Naive thymus-derived CD4-positive, alpha-beta T cell (primary cell): ENCODE measurements at regions of chr11 and their contacts with region 1.

Region 1: GRCh38 chr11:35144136-35144741 is 5.3 kb downstream of the CD44 start:
- DNase-seq: peak in 8 of 9 donors; percentile 59 to 85 (median 74)
- ATAC-seq: peak; percentile 59
- H3K4me3 ChIP-seq: peak overlapping the region; percentile 97
- H3K4me3 Mint-ChIP-seq: peak overlapping the region; percentile 83 to 99 (median 94)
- H3K27ac ChIP-seq: peak overlapping the region; percentile 88
- H3K27ac Mint-ChIP-seq: peak overlapping the region; percentile 79 to 100 (median 92)
- H3K4me1 ChIP-seq: peaks cover 68 to 74% of the 10 kb centered on the region in 2 donors
- H3K4me1 Mint-ChIP-seq: peaks cover 62 to 83% (median 77%) of the 10 kb centered on the region in 7 donors
- H3K27me3 ChIP-seq: no peaks in the 10 kb centered on the region
- H3K27me3 Mint-ChIP-seq: no peaks in the 10 kb centered on the region

Region 2: DNA sequence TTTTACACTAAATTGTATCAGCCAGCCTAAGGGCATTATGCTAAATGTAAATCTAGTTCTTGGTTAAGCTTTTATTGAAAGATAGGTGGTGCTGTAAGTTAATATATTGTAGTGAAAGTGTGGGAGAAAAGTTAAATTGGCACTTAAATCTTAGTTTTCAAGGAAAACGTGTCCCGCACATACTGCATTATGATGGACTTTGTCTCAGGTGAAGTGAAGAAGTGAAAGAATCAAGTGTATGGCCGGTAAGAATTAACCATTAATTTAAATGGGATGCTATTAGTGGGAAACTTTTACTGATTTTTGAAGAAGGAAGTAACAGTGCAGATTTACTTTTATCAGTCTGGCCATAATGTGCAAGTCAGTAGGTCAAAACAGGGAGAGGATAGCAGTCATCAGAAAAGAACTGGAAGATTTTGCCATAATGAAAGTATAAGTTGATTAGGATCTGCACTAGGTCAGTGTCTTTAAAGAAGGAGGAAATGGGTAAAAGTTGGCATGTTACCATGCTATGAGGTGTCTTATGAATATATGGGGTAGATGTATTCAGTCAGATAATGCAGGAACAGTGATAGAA is 146.2 kb before region 1 on chr11:
- CTCF ChIA-PET with region 1: interaction called, 33 read pairs
- POLR2A ChIA-PET with region 1: interaction called, 8 read pairs
- intact Hi-C with region 1: loop called in 1 of 2 experiments (anchors 1 kb)
- DNase-seq: peak in 6 of 9 donors; percentile 27 to 54 (median 44)
- ATAC-seq: peak; percentile 72
- H3K4me3 ChIP-seq: no peak overlapping the region
- H3K4me3 Mint-ChIP-seq: peak overlapping the region in 9 of 10 donors; percentile 6 to 81 (median 34)
- H3K27ac ChIP-seq: peak overlapping the region; percentile 8
- H3K27ac Mint-ChIP-seq: peak overlapping the region; percentile 15 to 90 (median 69)
- H3K4me1 ChIP-seq: peaks cover 15 to 19% of the 10 kb centered on the region in 2 donors
- H3K4me1 Mint-ChIP-seq: peaks cover 19 to 38% (median 35%) of the 10 kb centered on the region in 7 donors
- H3K27me3 ChIP-seq: no peaks in the 10 kb centered on the region
- H3K27me3 Mint-ChIP-seq: no peaks in the 10 kb centered on the region

Region 3: GRCh38 chr11:35040221-35040942 is 103.9 kb before region 1 on chr11:
- CTCF ChIA-PET with region 1: interaction called, 7 read pairs
- POLR2A ChIA-PET with region 1: interaction called, 75 read pairs
- intact Hi-C with region 1: loop called (anchors 1 kb)
- DNase-seq: peak in 8 of 9 donors; percentile 53 to 89 (median 74)
- ATAC-seq: peak; percentile 88
- H3K4me3 ChIP-seq: peak overlapping the region; percentile 60
- H3K4me3 Mint-ChIP-seq: peak overlapping the region; percentile 74 to 94 (median 89)
- H3K27ac ChIP-seq: peak overlapping the region; percentile 86
- H3K27ac Mint-ChIP-seq: peak overlapping the region; percentile 90 to 99 (median 97)
- H3K4me1 ChIP-seq: peaks cover 29 to 45% of the 10 kb centered on the region in 2 donors
- H3K4me1 Mint-ChIP-seq: peaks cover 28 to 77% (median 68%) of the 10 kb centered on the region in 7 donors
- H3K27me3 ChIP-seq: no peaks in the 10 kb centered on the region
- H3K27me3 Mint-ChIP-seq: peaks cover 0 to 29% (median 0%) of the 10 kb centered on the region in 5 donors

Region 4: GRCh38 chr11:35047179-35047578 is 97.1 kb before region 1 on chr11:
- CTCF ChIA-PET with region 1: interaction called, 7 read pairs
- POLR2A ChIA-PET with region 1: interaction called, 75 read pairs
- intact Hi-C with region 1: loop called (anchors 1 kb)
- DNase-seq: peak in 8 of 9 donors; percentile 47 to 88 (median 84)
- ATAC-seq: peak; percentile 79
- H3K4me3 ChIP-seq: no peak overlapping the region
- H3K4me3 Mint-ChIP-seq: peak overlapping the region; percentile 27 to 84 (median 71)
- H3K27ac ChIP-seq: peak overlapping the region; percentile 89
- H3K27ac Mint-ChIP-seq: peak overlapping the region; percentile 90 to 100 (median 99)
- H3K4me1 ChIP-seq: peaks cover 44 to 87% of the 10 kb centered on the region in 2 donors
- H3K4me1 Mint-ChIP-seq: peaks cover 66 to 99% (median 95%) of the 10 kb centered on the region in 7 donors
- H3K27me3 ChIP-seq: no peaks in the 10 kb centered on the region
- H3K27me3 Mint-ChIP-seq: peaks cover 0 to 7% (median 0%) of the 10 kb centered on the region in 5 donors

Region 5: GRCh38 chr11:35158701-35159510 is 14.7 kb after region 1 on chr11:
- CTCF ChIA-PET with region 1: interaction called, 12 read pairs
- POLR2A ChIA-PET with region 1: interaction called, 185 read pairs
- intact Hi-C with region 1: loop called (anchors 1 kb)
- DNase-seq: no peak
- ATAC-seq: no peak
- H3K4me3 ChIP-seq: peak overlapping the region; percentile 6
- H3K4me3 Mint-ChIP-seq: peak overlapping the region; percentile 48 to 94 (median 80)
- H3K27ac ChIP-seq: peak overlapping the region; percentile 94
- H3K27ac Mint-ChIP-seq: peak overlapping the region; percentile 68 to 100 (median 100)
- H3K4me1 ChIP-seq: peaks cover 97 to 98% of the 10 kb centered on the region in 2 donors
- H3K4me1 Mint-ChIP-seq: peaks cover 73 to 100% (median 99%) of the 10 kb centered on the region in 7 donors
- H3K27me3 ChIP-seq: no peaks in the 10 kb centered on the region
- H3K27me3 Mint-ChIP-seq: no peaks in the 10 kb centered on the region

Region 6: GRCh38 chr11:35178873-35179272 is 34.6 kb after region 1 on chr11:
- CTCF ChIA-PET with region 1: interaction called, 11 read pairs
- POLR2A ChIA-PET with region 1: interaction called, 33 read pairs
- intact Hi-C with region 1: loop called (anchors 1 kb)
- DNase-seq: no peak
- ATAC-seq: no peak
- H3K4me3 ChIP-seq: no peak overlapping the region
- H3K4me3 Mint-ChIP-seq: peak overlapping the region in 9 of 10 donors; percentile 44 to 77 (median 59)
- H3K27ac ChIP-seq: peak overlapping the region; percentile 65
- H3K27ac Mint-ChIP-seq: peak overlapping the region; percentile 85 to 100 (median 94)
- H3K4me1 ChIP-seq: peaks cover 84 to 89% of the 10 kb centered on the region in 2 donors
- H3K4me1 Mint-ChIP-seq: peaks cover 62 to 93% (median 91%) of the 10 kb centered on the region in 7 donors
- H3K27me3 ChIP-seq: no peaks in the 10 kb centered on the region
- H3K27me3 Mint-ChIP-seq: no peaks in the 10 kb centered on the region

Region 7: DNA sequence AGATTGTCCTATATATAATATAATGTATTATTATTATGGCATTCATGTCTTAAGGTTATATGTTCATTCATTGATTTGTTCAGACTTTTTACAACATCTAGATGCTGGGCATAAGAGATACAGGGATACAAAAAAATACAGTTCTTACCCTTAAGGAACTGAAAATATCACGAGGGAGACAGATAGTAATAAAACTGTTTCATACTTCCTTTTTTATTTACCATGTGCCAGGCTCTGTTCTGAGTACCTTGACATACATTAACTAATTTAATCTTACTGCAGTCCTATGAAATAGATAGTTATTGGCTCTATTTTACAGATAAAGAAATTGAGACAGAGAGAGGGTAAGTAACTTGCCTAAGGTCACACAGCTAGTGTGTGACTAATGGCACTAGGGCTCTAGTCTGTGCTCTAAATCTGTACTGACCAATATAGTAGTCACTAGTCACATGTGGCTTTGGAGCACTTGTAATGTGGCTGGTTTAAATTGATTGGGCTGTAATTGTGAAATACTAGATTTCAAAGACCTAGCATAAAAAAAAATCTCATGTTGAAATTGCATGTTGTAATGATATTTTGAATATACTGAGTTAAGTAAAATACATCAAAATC is 539.6 kb after region 1 on chr11:
- CTCF ChIA-PET with region 1: no interaction called
- POLR2A ChIA-PET with region 1: no interaction called
- intact Hi-C with region 1: no loop called
- DNase-seq: no peak
- ATAC-seq: peak; percentile 80
- H3K4me3 ChIP-seq: no peak overlapping the region
- H3K4me3 Mint-ChIP-seq: no peak overlapping the region
- H3K27ac ChIP-seq: no peak overlapping the region
- H3K27ac Mint-ChIP-seq: no peak overlapping the region
- H3K4me1 ChIP-seq: peaks cover 0 to 5% of the 10 kb centered on the region in 2 donors
- H3K4me1 Mint-ChIP-seq: peaks cover 18 to 72% (median 67%) of the 10 kb centered on the region in 7 donors
- H3K27me3 ChIP-seq: no peaks in the 10 kb centered on the region
- H3K27me3 Mint-ChIP-seq: no peaks in the 10 kb centered on the region